ENCODE measurements at regions of chr3 and their contacts with region 1.

Region 1: GRCh38 chr3:4978204-4978965 is 852 bp upstream of the BHLHE40 start:
- DNase-seq: peak; percentile 92
- ATAC-seq: peak; percentile 60
- H3K4me3 Mint-ChIP-seq: peak overlapping the region; percentile 98
- H3K27ac Mint-ChIP-seq: peak overlapping the region; percentile 99
- H3K4me1 Mint-ChIP-seq: peaks cover 26% of the 10 kb centered on the region
- H3K27me3 Mint-ChIP-seq: no peaks in the 10 kb centered on the region

Region 2: DNA sequence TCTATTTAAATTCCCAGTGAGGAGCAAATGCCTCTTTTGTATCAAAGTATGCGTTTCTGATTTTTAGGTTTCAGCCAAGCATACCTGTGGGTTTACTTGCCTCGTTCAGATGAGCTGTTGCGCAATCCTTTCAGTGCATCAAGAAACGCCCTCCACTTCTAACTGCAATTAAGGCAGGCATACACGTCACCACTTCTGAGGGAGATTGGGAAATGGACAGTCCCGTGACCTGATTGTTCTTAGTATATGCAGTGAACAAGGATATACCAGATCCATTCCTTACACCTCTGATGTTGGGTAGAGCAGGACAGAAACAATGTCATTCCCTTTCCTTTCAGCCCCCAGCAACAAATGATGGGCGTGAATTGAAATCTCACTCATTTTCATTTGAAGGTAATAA is 266.2 kb before region 1 on chr3:
- POLR2A ChIA-PET with region 1: interaction called, 45 read pairs
- DNase-seq: no peak
- ATAC-seq: no peak
- H3K4me3 Mint-ChIP-seq: no peak overlapping the region
- H3K27ac Mint-ChIP-seq: no peak overlapping the region
- H3K4me1 Mint-ChIP-seq: peaks cover 27% of the 10 kb centered on the region
- H3K27me3 Mint-ChIP-seq: no peaks in the 10 kb centered on the region

Region 3: GRCh38 chr3:4736284-4736861 is 242.0 kb before region 1 on chr3:
- POLR2A ChIA-PET with region 1: interaction called, 52 read pairs
- DNase-seq: no peak
- ATAC-seq: peak; percentile 20
- H3K4me3 Mint-ChIP-seq: peak overlapping the region; percentile 66
- H3K27ac Mint-ChIP-seq: peak overlapping the region; percentile 97
- H3K4me1 Mint-ChIP-seq: peaks cover 78% of the 10 kb centered on the region
- H3K27me3 Mint-ChIP-seq: no peaks in the 10 kb centered on the region

Region 4: DNA sequence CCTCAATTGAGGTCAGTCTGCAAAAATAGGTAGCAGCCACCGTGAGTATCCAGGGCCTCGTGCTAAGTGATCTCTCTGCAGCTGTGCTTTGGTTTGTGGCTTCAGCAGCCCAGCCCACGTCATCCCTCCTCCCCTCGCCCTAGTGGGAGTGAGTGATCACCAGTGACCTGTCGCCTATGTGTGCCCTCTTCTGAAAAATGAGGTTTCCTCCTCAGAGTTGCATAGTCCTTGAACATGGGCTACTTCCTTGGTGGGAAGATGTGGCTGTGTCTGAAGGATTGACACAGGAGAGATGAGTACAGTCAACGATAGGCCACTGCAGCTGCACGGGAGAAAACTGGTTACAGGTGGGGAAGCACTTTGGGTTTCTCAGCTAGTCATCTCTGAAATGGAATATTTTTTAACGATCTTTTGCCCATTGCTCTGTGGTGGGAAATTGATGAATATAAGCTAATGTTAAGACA is 143.9 kb before region 1 on chr3:
- POLR2A ChIA-PET with region 1: interaction called, 489 read pairs
- DNase-seq: peak; percentile 72
- ATAC-seq: peak; percentile 57
- H3K4me3 Mint-ChIP-seq: peak overlapping the region; percentile 81
- H3K27ac Mint-ChIP-seq: peak overlapping the region; percentile 96
- H3K4me1 Mint-ChIP-seq: peaks cover 80% of the 10 kb centered on the region
- H3K27me3 Mint-ChIP-seq: no peaks in the 10 kb centered on the region

Region 5: GRCh38 chr3:4888913-4889846 is 89.2 kb before region 1 on chr3:
- POLR2A ChIA-PET with region 1: interaction called, 10 read pairs
- DNase-seq: peak; percentile 54
- ATAC-seq: peak; percentile 95
- H3K4me3 Mint-ChIP-seq: peak overlapping the region; percentile 49
- H3K27ac Mint-ChIP-seq: peak overlapping the region; percentile 94
- H3K4me1 Mint-ChIP-seq: peaks cover 32% of the 10 kb centered on the region
- H3K27me3 Mint-ChIP-seq: no peaks in the 10 kb centered on the region

Region 6: DNA sequence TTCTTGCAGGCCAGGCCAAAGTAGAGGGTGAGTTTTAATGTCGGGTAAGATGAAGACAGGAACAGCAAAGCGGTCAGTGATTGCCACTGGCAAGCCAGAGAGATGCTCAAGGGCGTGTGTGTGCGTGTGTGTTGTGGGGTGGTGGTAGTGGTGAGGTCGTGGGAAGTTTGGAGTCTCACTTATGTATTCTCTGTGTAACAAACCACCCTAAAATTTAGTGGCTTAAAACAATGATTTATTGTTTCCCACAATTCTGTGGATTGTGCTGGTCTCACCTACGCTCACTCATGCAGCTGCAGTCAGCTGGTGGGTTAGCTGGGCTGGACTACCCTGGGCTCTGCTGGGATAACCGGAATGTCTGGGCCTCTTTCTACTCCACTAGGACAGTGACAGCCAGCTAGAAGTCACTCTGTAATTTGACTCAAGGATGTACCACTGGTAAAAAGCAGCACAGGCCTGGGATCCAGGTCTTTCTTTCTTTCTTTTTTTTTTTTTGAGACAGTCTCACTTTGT is 50.1 kb before region 1 on chr3:
- POLR2A ChIA-PET with region 1: interaction called, 15 read pairs
- DNase-seq: peak; percentile 49
- ATAC-seq: peak; percentile 18
- H3K4me3 Mint-ChIP-seq: peak overlapping the region; percentile 0
- H3K27ac Mint-ChIP-seq: peak overlapping the region; percentile 74
- H3K4me1 Mint-ChIP-seq: peaks cover 24% of the 10 kb centered on the region
- H3K27me3 Mint-ChIP-seq: no peaks in the 10 kb centered on the region

Region 7: GRCh38 chr3:5071061-5071460 is 92.7 kb after region 1 on chr3:
- POLR2A ChIA-PET with region 1: no interaction called
- DNase-seq: no peak
- ATAC-seq: no peak
- H3K4me3 Mint-ChIP-seq: no peak overlapping the region
- H3K27ac Mint-ChIP-seq: no peak overlapping the region
- H3K4me1 Mint-ChIP-seq: no peaks in the 10 kb centered on the region
- H3K27me3 Mint-ChIP-seq: peaks cover 37% of the 10 kb centered on the region

Region 8: DNA sequence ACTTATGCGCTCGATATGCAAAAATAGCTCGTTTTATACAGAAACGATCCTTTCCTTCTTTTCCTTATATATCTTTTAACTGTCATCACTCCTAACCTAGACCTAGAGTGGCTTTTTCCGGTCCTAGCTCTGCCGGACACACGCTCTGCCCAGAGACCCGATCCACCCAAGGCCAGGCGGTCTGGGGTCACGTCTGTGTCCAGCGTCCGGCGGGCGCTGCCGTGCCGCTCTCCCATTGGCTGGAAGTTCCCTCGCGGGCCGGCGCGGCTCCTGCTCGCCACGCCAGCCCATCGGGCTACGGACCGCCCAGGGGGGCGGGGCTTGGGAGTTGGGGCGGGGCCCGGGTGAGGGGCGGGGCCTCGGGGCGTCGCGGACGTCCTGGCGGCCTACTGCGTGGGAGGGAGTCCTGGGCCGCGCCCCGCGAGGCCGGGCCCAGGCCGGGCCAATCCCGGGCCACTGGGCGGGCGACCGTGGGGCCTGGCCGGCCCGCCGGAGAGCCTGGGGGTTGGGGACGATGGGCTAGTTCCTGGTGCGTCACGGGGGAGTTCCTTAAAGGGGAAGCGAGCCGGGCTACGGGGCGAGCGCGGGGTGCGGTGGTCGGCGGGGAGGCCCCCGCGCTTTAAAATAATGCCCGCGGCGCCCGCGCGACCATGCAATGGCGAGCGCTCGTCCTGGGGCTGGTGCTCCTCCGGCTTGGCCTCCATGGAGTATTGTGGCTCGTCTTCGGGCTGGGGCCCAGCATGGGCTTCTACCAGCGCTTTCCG is 209.0 kb after region 1 on chr3 and contains the start of gene EDEM1:
- POLR2A ChIA-PET with region 1: interaction called, 18 read pairs
- DNase-seq: peak; percentile 99
- ATAC-seq: peak; percentile 96
- H3K4me3 Mint-ChIP-seq: peak within 1 kb of the TSS; percentile 99
- H3K27ac Mint-ChIP-seq: peak within 1 kb of the TSS; percentile 100
- H3K4me1 Mint-ChIP-seq: peaks cover 28% of the 10 kb centered on the region
- H3K27me3 Mint-ChIP-seq: no peaks in the 10 kb centered on the region
- total RNA-seq, gene EDEM1: 92.5 to 94.2 TPM

Measured in activated naive CD8-positive, alpha-beta T cell treated with anti-CD3 and anti-CD28 coated beads, Interleukin-2, amount 10 ng/mL, durations not matched to agents 7 days and 5 days (primary cell).